B cell (primary cell): ENCODE measurements at regions of chr11 and their contacts with region 1.

Region 1: DNA sequence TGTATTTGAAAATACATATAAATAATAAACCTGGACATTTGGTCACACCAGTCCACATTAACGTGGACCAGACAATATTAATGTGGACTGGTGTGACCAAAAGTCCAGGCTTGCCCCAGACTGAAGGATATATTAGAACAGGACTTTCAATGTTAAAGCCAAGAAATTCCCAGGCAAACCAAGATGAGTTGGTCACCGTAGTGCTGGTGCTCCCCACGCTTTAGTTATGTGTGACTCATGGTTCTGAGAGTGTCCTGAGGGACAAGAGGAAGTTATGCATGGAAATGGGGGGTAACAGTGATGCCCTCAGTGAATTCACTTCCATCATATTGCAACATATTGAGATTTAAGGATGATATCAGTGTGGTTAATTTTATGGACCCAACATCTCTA is 31.4 kb downstream of the POU2AF1 start:
- DNase-seq: no peak
- ATAC-seq: no peak
- H3K4me3 ChIP-seq: no peak overlapping the region
- H3K4me3 Mint-ChIP-seq: no peak overlapping the region
- H3K27ac ChIP-seq: no peak overlapping the region
- H3K27ac Mint-ChIP-seq: peak overlapping the region; percentile 62
- H3K4me1 ChIP-seq: peaks cover 2 to 11% of the 10 kb centered on the region in 2 donors
- H3K4me1 Mint-ChIP-seq: peaks cover 59% of the 10 kb centered on the region
- H3K27me3 ChIP-seq: no peaks in the 10 kb centered on the region
- H3K27me3 Mint-ChIP-seq: no peaks in the 10 kb centered on the region
- CTCF ChIP-seq: no peak

Region 2: DNA sequence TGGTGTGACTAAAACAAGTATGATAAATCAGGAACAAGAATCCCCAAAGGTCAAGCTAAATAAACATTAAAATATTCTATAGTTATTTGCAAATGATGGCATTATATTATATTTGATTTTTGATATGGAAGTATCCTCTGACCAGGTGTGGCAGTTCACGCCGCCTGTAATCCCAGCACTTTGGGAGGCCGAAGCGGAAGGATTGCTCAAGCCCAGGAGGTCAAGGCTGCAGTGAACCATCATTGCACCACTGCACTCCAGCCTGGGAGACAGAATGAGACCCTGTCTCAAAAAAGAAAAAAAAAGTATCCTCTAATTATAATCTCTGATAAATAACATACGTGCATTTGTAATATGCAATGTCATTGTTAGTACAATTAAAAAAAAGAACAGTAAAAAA is 56.0 kb before region 1 on chr11:
- CTCF ChIA-PET with region 1: no interaction called
- POLR2A ChIA-PET with region 1: no interaction called
- intact Hi-C with region 1: loop called (anchors 5 kb)
- DNase-seq: no peak
- ATAC-seq: no peak
- H3K4me3 ChIP-seq: no peak overlapping the region
- H3K4me3 Mint-ChIP-seq: no peak overlapping the region
- H3K27ac ChIP-seq: no peak overlapping the region
- H3K27ac Mint-ChIP-seq: no peak overlapping the region
- H3K4me1 ChIP-seq: no peaks in the 10 kb centered on the region
- H3K4me1 Mint-ChIP-seq: no peaks in the 10 kb centered on the region
- H3K27me3 ChIP-seq: no peaks in the 10 kb centered on the region
- H3K27me3 Mint-ChIP-seq: no peaks in the 10 kb centered on the region
- CTCF ChIP-seq: no peak

Region 3: DNA sequence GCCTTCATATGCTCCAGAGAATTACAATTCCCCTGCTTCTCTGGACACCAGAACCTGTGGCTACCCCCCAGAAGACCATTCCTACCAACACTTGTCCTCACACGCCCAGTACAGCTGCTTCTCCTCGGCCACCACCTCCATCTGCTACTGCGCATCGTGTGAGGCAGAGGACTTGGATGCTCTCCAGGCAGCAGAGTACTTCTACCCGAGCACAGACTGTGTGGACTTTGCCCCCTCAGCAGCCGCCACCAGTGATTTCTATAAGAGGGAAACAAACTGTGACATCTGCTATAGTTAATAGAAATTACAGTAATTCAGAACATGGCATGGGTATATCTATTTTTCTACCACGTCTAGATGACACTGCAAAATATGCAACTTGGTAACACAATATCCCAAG is 39.6 kb before region 1 on chr11:
- CTCF ChIA-PET with region 1: no interaction called
- POLR2A ChIA-PET with region 1: no interaction called
- intact Hi-C with region 1: loop called (anchors 5 kb)
- DNase-seq: no peak
- ATAC-seq: no peak
- H3K4me3 ChIP-seq: no peak overlapping the region
- H3K4me3 Mint-ChIP-seq: no peak overlapping the region
- H3K27ac ChIP-seq: no peak overlapping the region
- H3K27ac Mint-ChIP-seq: no peak overlapping the region
- H3K4me1 ChIP-seq: no peaks in the 10 kb centered on the region
- H3K4me1 Mint-ChIP-seq: peaks cover 2% of the 10 kb centered on the region
- H3K27me3 ChIP-seq: peaks cover 0 to 4% (median 2%) of the 10 kb centered on the region in 4 experiments
- H3K27me3 Mint-ChIP-seq: no peaks in the 10 kb centered on the region
- CTCF ChIP-seq: no peak

Region 4: GRCh38 chr11:111387363-111387762 is 39.6 kb after region 1 on chr11:
- CTCF ChIA-PET with region 1: no interaction called
- POLR2A ChIA-PET with region 1: interaction called, 4 read pairs
- intact Hi-C with region 1: loop called (anchors 5 kb)
- DNase-seq: no peak
- ATAC-seq: no peak
- H3K4me3 ChIP-seq: no peak overlapping the region
- H3K4me3 Mint-ChIP-seq: no peak overlapping the region
- H3K27ac ChIP-seq: no peak overlapping the region
- H3K27ac Mint-ChIP-seq: no peak overlapping the region
- H3K4me1 ChIP-seq: peaks cover 30 to 34% of the 10 kb centered on the region in 2 donors
- H3K4me1 Mint-ChIP-seq: peaks cover 40% of the 10 kb centered on the region
- H3K27me3 ChIP-seq: no peaks in the 10 kb centered on the region
- H3K27me3 Mint-ChIP-seq: no peaks in the 10 kb centered on the region
- CTCF ChIP-seq: no peak

Region 5: DNA sequence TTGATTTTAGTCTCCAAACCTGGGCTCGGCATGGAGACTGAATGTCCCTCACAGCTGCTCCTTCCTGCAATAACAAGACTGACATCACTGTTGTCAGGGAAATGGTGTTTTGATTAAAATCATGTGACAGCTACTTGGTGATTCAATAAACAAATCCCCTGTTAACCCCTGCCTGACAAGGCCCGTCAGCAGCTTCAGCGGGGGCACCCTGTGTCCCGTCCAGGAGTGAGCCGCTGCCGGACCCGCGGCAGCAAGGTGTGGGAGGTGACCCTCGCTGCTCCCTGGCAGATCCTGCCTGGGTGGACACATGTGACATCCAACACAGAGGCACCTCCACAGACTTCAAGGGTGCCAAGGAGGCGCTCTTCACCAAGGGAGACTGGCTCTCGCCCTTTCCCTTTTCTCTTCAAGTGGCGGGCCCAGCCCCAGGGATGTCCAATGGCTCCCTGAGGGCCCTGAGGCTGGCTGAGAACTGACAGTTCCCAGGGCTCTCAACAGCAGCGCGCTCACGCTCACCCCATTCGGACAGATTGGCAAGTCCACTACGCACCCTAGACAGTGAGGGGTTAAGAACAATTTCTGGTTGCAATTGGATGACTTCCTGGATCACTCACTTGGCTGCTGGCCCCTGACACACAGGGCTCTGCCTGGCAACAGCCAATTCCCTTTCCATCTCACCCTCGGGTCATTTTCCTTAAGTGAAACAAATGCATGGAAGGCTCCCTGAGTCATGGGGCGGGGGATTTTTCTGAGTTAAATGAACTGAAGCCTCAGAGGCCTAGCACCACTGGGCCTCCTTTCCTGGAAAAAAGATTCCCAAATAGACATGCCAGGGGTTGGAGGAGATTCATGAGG is 387.8 kb after region 1 on chr11:
- CTCF ChIA-PET with region 1: no interaction called
- POLR2A ChIA-PET with region 1: no interaction called
- intact Hi-C with region 1: no loop called
- DNase-seq: no peak
- ATAC-seq: no peak
- H3K4me3 ChIP-seq: no peak overlapping the region
- H3K4me3 Mint-ChIP-seq: no peak overlapping the region
- H3K27ac ChIP-seq: no peak overlapping the region
- H3K27ac Mint-ChIP-seq: no peak overlapping the region
- H3K4me1 ChIP-seq: no peaks in the 10 kb centered on the region
- H3K4me1 Mint-ChIP-seq: peaks cover 2% of the 10 kb centered on the region
- H3K27me3 ChIP-seq: no peaks in the 10 kb centered on the region
- H3K27me3 Mint-ChIP-seq: no peaks in the 10 kb centered on the region
- CTCF ChIP-seq: no peak